ENCODE measurements at regions of chr13 and their contacts with region 1.

Region 1: DNA sequence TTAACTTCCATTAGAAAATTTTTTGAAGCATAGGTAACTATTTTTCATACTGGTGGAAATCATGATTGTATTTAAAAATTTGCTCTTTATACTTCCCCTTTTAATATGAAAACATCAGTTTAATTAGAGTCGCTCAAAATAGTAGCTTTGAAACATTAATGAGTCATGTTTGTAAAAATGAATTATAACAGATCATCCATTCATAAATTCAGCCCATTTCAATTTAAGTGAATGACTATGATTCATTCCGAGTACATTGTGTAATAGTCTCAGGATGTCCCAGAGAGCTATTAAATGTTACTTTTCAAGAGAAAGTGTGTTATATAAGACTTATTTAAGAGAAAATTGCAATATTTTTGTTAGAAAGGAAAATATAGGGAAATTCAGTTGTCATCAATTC is 111.0 kb downstream of the FNDC3A start:
- DNase-seq: no peak
- H3K4me3 Mint-ChIP-seq: no peak overlapping the region
- H3K27ac Mint-ChIP-seq: no peak overlapping the region
- H3K4me1 Mint-ChIP-seq: peaks cover 12% of the 10 kb centered on the region
- H3K27me3 Mint-ChIP-seq: no peaks in the 10 kb centered on the region

Region 2: DNA sequence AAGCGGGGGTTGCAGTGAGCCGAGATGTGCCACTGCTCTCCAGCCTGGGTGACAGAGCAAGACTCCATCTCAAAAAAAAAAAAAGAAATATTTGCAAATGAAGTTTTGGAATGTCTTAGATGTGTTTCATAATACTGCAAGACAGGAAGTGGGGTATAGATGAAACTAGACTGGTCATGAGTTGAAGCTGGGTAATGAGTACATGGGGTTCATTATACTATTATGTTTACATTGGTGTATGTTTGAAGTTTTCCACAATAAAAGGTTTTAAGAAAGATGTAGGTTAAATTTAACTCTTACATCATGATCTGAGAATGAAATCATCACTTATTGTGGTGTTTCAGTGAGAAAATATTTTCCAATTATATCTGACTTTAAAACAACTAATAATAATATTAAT is 92.0 kb before region 1 on chr13:
- CTCF ChIA-PET with region 1: no interaction called
- POLR2A ChIA-PET with region 1: no interaction called
- intact Hi-C with region 1: loop called (anchors 5 kb)
- DNase-seq: no peak
- H3K4me3 Mint-ChIP-seq: no peak overlapping the region
- H3K27ac Mint-ChIP-seq: no peak overlapping the region
- H3K4me1 Mint-ChIP-seq: peaks cover 32% of the 10 kb centered on the region
- H3K27me3 Mint-ChIP-seq: no peaks in the 10 kb centered on the region

Measured in activated CD4-positive, alpha-beta memory T cell treated with anti-CD3 and anti-CD28 coated beads for 36 hours (primary cell).